Left ventricle myocardium inferior (tissue), 1 donor: ENCODE measurements at regions of chr17 and their contacts with region 1.

Region 1: DNA sequence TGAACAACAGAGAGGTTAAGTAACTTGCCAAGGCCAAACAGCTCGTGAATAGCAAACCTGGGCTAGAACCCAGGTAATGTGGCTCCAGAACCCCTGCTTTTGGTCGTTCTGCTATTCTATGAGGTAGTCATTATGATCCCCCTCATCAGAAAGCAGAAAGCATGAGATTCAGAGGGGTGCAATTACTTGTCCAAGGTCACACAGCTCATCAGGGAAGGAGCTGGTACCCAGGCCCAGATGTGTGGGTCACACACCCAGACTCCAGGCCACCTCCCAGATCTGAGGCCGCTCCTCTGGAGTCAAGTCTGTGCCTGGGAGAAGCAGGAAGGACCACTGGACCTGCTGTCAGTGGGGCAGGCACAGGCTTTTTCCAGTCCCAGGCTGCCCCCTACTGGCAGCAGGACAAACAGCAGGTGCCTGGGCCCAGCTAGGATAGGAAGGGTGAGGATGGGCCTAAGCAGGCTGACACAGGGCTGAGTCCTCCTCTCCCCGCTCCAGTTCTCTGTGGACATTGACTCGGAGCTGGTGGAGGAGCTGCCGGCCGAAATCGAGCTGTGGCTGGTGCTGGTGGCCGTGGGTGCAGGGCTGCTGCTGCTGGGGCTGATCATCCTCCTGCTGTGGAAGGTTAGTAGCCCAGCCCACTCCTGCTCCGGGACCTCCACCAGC is 7.8 kb upstream of the PDK2 start:
- DNase-seq: peak; percentile 74
- H3K4me3 ChIP-seq: no peak overlapping the region
- H3K27ac ChIP-seq: no peak overlapping the region
- H3K4me1 ChIP-seq: no peaks in the 10 kb centered on the region
- H3K27me3 ChIP-seq: no peaks in the 10 kb centered on the region
- CTCF ChIP-seq: peak; percentile 98

Region 2: GRCh38 chr17:50026901-50027630 is 60.3 kb before region 1 on chr17:
- intact Hi-C with region 1: loop called (anchors 5 kb)
- DNase-seq: peak; percentile 84
- H3K4me3 ChIP-seq: peak overlapping the region; percentile 46
- H3K27ac ChIP-seq: peak overlapping the region; percentile 30
- H3K4me1 ChIP-seq: peaks cover 25% of the 10 kb centered on the region
- H3K27me3 ChIP-seq: peaks cover 23% of the 10 kb centered on the region
- CTCF ChIP-seq: peak; percentile 97